ENCODE measurements at regions of chr1 and their contacts with region 1.

Region 1: GRCh38 chr1:116485071-116485735 is 85.6 kb downstream of the CD58 start:
- DNase-seq: peak; percentile 96

Region 2: DNA sequence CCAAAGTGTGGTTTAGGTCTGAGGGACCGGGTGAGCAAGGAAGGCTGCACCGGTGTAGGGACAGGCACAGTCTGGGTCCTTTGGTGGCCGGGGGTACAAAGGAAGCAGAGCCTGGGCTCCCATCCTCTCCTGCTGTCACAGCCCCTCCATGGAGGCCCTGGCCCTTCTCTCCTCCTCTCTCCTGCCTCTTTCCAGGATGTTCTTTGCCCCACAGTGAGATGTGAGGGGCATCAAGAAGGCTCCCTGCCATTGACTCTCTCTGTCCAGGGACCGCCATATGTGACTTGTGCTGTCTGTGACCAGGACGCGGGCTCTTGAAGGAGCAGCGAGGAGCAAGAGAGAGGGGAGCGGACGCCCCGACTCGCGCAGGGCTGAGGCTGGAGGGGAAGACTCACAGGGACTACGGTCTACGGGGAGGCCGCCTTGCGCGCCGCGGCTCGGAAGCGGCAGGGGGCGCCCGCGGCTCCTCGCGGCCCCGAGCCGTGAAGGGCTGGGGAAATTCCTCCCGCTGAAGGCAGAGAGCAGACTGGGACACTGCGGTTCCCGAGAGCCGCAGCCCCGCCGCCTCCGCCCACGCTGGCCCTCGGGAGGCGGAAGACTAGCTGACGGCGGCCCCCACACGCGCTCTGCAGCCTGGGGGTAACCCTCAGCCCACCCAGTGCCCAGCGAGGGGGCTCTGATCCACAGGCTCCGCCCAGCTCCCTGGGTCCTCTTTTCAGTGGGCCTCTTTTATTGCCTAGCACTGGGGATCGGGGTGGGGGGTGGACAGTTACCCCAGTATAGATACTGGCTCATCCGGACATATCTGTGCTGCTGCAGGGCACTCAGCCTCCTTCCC is 333.2 kb before region 1 on chr1:
- intact Hi-C with region 1: loop called in 1 of 2 experiments (anchors 5 kb)
- DNase-seq: peak; percentile 92

Region 3: GRCh38 chr1:116202934-116203723 is 282.1 kb before region 1 on chr1:
- intact Hi-C with region 1: no loop called
- DNase-seq: no peak

Region 4: DNA sequence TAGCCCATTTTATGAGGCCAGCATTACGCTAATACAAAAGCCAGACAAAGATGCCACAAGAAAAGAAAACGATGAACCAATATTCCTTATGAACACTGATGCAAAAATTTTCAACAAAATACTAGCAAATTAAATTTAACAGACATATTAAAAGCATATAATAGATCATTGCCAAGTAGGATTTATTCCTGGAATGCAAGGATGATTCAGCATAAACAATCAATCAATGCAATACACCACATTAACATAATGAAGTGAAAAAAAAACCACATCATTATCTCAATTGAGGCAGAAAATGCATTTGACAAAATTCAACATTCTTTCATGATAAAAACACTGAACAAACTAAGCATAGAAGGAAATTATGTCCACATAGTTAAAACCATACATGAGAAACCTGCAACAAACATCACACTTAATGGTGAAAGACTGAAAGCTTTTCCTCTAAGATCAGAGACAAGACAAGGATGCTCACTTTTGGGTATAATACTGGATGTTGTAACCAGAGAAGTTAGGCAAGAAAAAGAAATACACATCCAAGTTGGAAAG is 135.0 kb before region 1 on chr1:
- intact Hi-C with region 1: no loop called
- DNase-seq: no peak

Region 5: GRCh38 chr1:116360429-116361173 is 124.6 kb before region 1 on chr1:
- intact Hi-C with region 1: loop called (anchors 5 to 10 kb)
- DNase-seq: no peak

Region 6: DNA sequence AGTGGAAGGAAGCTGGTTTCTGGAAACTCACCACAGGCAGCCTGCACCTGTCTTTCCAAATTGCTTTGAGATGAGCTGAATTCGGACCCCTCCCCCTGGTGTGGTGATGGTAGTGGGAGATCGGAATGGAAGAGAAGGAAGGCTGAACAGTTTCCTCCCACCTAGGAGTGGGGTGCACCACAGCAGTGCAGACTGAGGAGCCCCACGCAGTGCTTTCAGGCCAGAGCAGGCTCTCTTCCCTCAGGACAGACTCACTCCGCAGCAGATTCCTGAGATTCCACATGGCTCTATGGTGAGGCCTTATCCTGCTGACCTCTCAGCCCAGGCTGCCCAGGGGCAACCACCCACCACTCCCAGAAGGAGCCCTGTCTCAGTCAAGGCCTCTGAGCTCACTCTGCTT is 31.3 kb before region 1 on chr1:
- intact Hi-C with region 1: loop called in 1 of 2 experiments (anchors 1 kb)
- DNase-seq: no peak